Activated T-helper 1 cell treated with anti-CD3 and anti-CD28 coated beads, Interleukin-12 subunit alpha, Interleukin-12 subunit beta, Interleukin-2, Interleukin-4 antibody, amounts not matched to agents 30 ng/mL and 10 ng/mL and 1 ng/mL, durations not matched to agents 14 hours and 24 hours and 36 hours (primary cell): ENCODE measurements at regions of chr11 and their contacts with region 1.

Region 1: DNA sequence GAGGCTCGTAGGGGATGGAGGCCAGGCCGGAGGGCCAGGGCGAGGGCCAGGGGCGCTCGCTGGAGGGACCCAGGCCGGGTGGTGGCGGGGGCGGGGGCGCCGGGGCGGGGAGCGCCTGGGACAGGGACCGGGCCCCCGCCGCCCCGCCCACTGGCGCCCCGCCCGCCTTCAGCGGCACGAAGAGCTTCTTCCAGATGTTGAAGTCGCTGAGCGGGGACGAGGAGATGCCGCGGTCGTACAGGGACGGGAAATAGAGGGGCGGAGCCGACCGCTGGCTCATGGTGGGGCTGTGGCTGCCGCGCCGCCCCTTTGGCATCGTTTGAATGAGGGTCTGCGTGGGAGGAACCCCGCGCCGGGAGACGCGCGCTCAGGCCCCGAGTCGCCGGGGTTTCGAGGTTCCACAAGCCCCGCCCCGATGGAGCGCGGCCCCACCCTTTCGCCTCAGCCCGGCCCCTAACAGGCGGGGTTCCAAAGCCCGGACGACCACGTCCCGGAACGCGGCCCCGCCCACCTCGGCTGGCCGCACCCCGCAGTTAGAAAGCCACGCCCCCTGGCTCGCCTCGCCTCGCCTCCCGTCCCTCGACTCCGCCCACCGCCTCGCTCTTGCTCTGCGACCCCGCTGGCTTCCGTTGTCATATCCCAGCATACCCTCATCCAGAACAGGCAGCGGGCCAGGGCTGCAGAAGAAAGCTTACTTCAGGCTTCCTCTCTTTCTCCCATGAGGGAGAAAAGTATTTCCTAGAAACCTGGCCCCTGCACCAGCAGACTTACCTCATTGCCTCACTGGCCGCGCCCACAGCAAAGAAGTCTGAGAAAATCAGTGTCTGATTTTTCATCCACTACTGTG is at the start of gene C11orf91:
- DNase-seq: peak; percentile 94
- H3K4me3 Mint-ChIP-seq: peak within 1 kb of the TSS; percentile 84
- H3K27ac Mint-ChIP-seq: peak within 1 kb of the TSS; percentile 78
- H3K4me1 Mint-ChIP-seq: peaks cover 29% of the 10 kb centered on the region
- H3K27me3 Mint-ChIP-seq: peaks cover 22% of the 10 kb centered on the region
- total RNA-seq, gene C11orf91: 0.23 TPM in 1 of 2 replicates, not detected in the other

Region 2: GRCh38 chr11:33564856-33565453 is 135.7 kb before region 1 on chr11:
- intact Hi-C with region 1: no loop called
- DNase-seq: no peak
- H3K4me3 Mint-ChIP-seq: no peak overlapping the region
- H3K27ac Mint-ChIP-seq: no peak overlapping the region
- H3K4me1 Mint-ChIP-seq: no peaks in the 10 kb centered on the region
- H3K27me3 Mint-ChIP-seq: peaks cover 8% of the 10 kb centered on the region

Region 3: GRCh38 chr11:33716236-33716635 is 15.6 kb after region 1 on chr11:
- intact Hi-C with region 1: no loop called
- DNase-seq: no peak
- H3K4me3 Mint-ChIP-seq: no peak overlapping the region
- H3K27ac Mint-ChIP-seq: no peak overlapping the region
- H3K4me1 Mint-ChIP-seq: peaks cover 15% of the 10 kb centered on the region
- H3K27me3 Mint-ChIP-seq: no peaks in the 10 kb centered on the region

Region 4: DNA sequence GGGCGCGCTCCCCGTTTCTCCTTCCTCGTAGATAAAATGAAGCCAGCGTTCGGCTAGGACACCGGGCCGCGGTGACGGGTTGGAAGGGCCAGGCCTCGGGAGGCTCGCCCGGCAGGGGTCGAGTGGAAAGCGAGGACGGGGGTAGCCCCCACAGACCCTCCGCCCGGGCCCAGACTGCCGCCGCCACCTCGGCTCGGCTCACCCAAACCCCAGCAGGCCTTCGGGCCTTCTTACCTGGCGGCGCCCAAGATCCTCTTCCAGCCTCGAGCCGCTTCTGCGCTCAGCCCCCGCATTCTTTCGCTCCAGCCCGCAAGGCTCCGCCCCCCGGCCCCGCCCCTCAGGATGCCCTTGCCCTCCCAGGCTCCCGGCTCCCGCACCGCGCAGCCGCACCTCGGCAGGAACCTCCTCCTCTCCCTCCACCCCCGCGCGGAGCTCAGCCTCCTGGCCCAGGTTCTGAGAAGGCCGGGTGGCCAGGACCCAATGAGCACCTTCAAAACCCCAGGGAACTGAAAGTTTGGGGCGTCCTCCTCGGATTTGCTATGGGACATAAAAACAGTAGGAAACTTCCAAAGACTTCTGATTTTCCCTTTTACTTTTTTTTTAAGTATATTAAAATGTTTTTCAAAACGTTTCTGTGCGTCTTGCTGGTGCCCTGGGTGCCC is 35.6 kb after region 1 on chr11 and contains the start of gene CD59:
- intact Hi-C with region 1: loop called (anchors 1 kb)
- DNase-seq: peak; percentile 83
- H3K4me3 Mint-ChIP-seq: peak within 1 kb of the TSS; percentile 87
- H3K27ac Mint-ChIP-seq: peak within 1 kb of the TSS; percentile 89
- H3K4me1 Mint-ChIP-seq: peaks cover 37% of the 10 kb centered on the region
- H3K27me3 Mint-ChIP-seq: peaks cover 3% of the 10 kb centered on the region
- total RNA-seq, gene CD59: 140 and 143 TPM in 2 replicates